ENCODE measurements at regions of chr2 and their contacts with region 1.

Region 1: GRCh38 chr2:197939787-197940186 is 135.4 kb downstream of the PLCL1 start:
- DNase-seq: no peak
- ATAC-seq: no peak
- H3K4me3 ChIP-seq: no peak overlapping the region
- H3K27ac ChIP-seq: no peak overlapping the region
- H3K4me1 ChIP-seq: no peaks in the 10 kb centered on the region
- H3K27me3 ChIP-seq: peaks cover 3% of the 10 kb centered on the region; the same call in 1 of the 2 replicates
- CTCF ChIP-seq: no peak

Region 2: GRCh38 chr2:196798980-196799379 is 1140.8 kb before region 1 on chr2:
- CTCF ChIA-PET with region 1: interaction called, 11 read pairs
- POLR2A ChIA-PET with region 1: no interaction called
- in situ Hi-C with region 1: no loop called
- intact Hi-C with region 1: no loop called
- DNase-seq: no peak
- ATAC-seq: no peak
- H3K4me3 ChIP-seq: peak overlapping the region; percentile 84 to 90
- H3K27ac ChIP-seq: peak overlapping the region; percentile 84
- H3K4me1 ChIP-seq: peaks cover 11% of the 10 kb centered on the region; the same call in 1 of the 2 replicates
- H3K27me3 ChIP-seq: no peaks in the 10 kb centered on the region
- CTCF ChIP-seq: no peak